ENCODE measurements at regions of chr1 and their contacts with region 1.

Region 1: GRCh38 chr1:89820422-89821321 is at the start of gene LRRC8D:
- DNase-seq: peak; percentile 86 to 93 (median 88)
- ATAC-seq: peak; percentile 95 to 98 (median 98)
- H3K4me3 ChIP-seq: peak within 1 kb of the TSS; percentile 69 to 99 (median 92)
- H3K27ac ChIP-seq: peak within 1 kb of the TSS; percentile 10 to 91 (median 78)
- H3K4me1 ChIP-seq: peaks cover 0 to 54% (median 17%) of the 10 kb centered on the region in 12 donors
- H3K27me3 ChIP-seq: no peaks in the 10 kb centered on the region
- CTCF ChIP-seq: peak in 2 of 12 donors; percentile 11 to 12
- POLR2A ChIP-seq: peak; percentile 8 to 74
- total RNA-seq, gene LRRC8D: 5.7 to 13.0 (median 8.0) TPM

Region 2: DNA sequence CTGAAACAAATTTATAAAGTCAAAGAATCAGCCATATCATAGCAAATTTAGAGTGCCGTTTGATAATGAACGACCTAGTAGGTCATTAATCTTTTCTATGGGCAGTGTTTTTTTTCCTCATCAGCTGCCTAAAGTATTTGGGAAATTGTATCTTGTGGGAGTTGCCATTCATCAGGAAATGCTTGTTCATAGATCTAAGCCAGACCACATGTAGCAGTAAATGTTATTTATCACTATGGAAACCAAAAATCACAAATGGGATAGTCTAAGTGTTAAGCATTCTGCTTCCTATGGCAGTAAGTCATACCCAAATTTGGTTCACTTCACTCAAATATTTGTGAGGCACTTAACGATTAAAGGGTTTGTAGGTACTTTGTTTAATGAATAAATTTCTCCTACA is 53.1 kb after region 1 on chr1:
- intact Hi-C with region 1: loop called in 1 of 10 experiments (anchors 5 kb)
- DNase-seq: no peak
- ATAC-seq: peak; percentile 33 to 80 (median 60)
- H3K4me3 ChIP-seq: no peak overlapping the region
- H3K27ac ChIP-seq: peak overlapping the region in 3 of 12 donors; percentile 11 to 36 (median 15)
- H3K4me1 ChIP-seq: peaks cover 0 to 59% (median 22%) of the 10 kb centered on the region in 12 donors
- H3K27me3 ChIP-seq: no peaks in the 10 kb centered on the region
- CTCF ChIP-seq: no peak
- POLR2A ChIP-seq: no peak

Region 3: GRCh38 chr1:89938171-89939055 is 117.7 kb after region 1 on chr1:
- intact Hi-C with region 1: loop called in 1 of 10 experiments (anchors 5 kb)
- DNase-seq: no peak
- ATAC-seq: peak in 1 of 4 donors; percentile 20
- H3K4me3 ChIP-seq: no peak overlapping the region
- H3K27ac ChIP-seq: no peak overlapping the region
- H3K4me1 ChIP-seq: peaks cover 0 to 27% (median 3%) of the 10 kb centered on the region in 12 donors
- H3K27me3 ChIP-seq: no peaks in the 10 kb centered on the region
- CTCF ChIP-seq: no peak
- POLR2A ChIP-seq: no peak

Region 4: GRCh38 chr1:89994805-89995597 is 174.3 kb after region 1 on chr1 and contains the start of gene ZNF326:
- intact Hi-C with region 1: loop called in 1 of 10 experiments (anchors 5 kb)
- DNase-seq: peak; percentile 96 to 98 (median 96)
- ATAC-seq: peak; percentile 97 to 99 (median 99)
- H3K4me3 ChIP-seq: peak within 1 kb of the TSS; percentile 66 to 97 (median 91)
- H3K27ac ChIP-seq: peak within 1 kb of the TSS; percentile 86 to 98 (median 96)
- H3K4me1 ChIP-seq: peaks cover 0 to 40% (median 26%) of the 10 kb centered on the region in 12 donors
- H3K27me3 ChIP-seq: no peaks in the 10 kb centered on the region
- CTCF ChIP-seq: peak in 2 of 12 donors; percentile 18 to 31
- POLR2A ChIP-seq: peak; percentile 86 to 96
- total RNA-seq, gene ZNF326: 4.9 to 14.7 (median 10.1) TPM

Measured in heart left ventricle (tissue), 16 donors.